Ascending aorta (tissue), 2 donors: ENCODE measurements at regions of chr10 and their contacts with region 1.

Region 1: DNA sequence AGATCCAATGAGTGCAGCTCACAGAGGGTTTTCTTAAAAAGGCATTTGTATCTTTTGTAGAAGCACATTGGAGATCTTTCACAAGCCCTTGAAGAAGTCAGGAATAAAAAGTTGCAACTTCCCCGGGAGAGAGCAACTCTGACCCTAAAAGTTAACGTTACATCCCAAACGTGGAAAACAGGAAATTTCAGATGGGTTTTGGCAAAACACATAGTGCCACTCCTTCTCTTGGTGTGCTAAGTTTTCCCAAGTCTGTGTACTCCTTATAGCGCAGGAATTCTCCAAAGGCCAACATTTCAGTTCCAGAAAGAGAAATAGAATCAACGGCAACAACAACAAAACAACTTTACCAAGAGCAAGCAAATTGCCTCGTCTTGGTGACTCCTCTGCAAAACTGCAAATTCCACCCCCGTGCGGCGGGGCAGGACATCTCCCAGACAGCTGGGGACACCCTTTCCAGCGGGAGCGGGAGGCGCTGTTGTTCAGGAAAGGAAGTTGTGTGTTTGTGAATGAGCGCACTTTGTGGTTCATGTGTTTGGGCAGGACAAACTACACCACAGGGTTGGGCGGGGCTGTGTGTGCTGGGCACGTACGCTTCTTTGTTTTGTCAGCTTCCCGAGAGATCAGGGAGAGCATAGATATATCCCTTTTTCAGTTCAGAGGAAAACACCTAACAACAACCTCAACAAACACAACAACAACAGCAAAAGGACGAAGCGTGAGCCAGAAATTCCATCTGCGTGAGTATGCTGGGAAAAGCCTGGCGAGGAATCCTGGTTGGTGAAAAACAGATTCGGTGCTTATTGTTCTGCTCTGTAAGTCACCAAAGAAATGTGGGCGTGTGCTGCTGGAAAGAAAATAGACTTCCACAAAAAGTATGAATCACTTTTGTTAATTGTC is 294.7 kb upstream of the PITRM1 start:
- DNase-seq: peak; percentile 39 to 84
- H3K4me3 ChIP-seq: peak overlapping the region in 1 of 2 donors; percentile 34
- H3K27ac ChIP-seq: peak overlapping the region; percentile 69 to 91
- H3K4me1 ChIP-seq: peaks cover 0 to 30% of the 10 kb centered on the region in 2 donors
- H3K27me3 ChIP-seq: no peaks in the 10 kb centered on the region
- CTCF ChIP-seq: peak in 2 of 3 experiments; percentile 21 to 36

Region 2: GRCh38 chr10:3398825-3399646 is 68.3 kb before region 1 on chr10:
- intact Hi-C with region 1: no loop called
- DNase-seq: no peak
- H3K4me3 ChIP-seq: no peak overlapping the region
- H3K27ac ChIP-seq: no peak overlapping the region
- H3K4me1 ChIP-seq: peaks cover 0 to 11% of the 10 kb centered on the region in 2 donors
- H3K27me3 ChIP-seq: no peaks in the 10 kb centered on the region
- CTCF ChIP-seq: no peak

Region 3: GRCh38 chr10:3452173-3452626 is 15.1 kb before region 1 on chr10:
- intact Hi-C with region 1: loop called (anchors 2 kb)
- DNase-seq: peak in 1 of 2 donors; percentile 71
- H3K4me3 ChIP-seq: peak overlapping the region in 1 of 2 donors; percentile 3
- H3K27ac ChIP-seq: peak overlapping the region; percentile 76 to 80
- H3K4me1 ChIP-seq: peaks cover 4 to 15% of the 10 kb centered on the region in 2 donors
- H3K27me3 ChIP-seq: no peaks in the 10 kb centered on the region
- CTCF ChIP-seq: peak; percentile 35 to 49 (median 49)

Region 4: DNA sequence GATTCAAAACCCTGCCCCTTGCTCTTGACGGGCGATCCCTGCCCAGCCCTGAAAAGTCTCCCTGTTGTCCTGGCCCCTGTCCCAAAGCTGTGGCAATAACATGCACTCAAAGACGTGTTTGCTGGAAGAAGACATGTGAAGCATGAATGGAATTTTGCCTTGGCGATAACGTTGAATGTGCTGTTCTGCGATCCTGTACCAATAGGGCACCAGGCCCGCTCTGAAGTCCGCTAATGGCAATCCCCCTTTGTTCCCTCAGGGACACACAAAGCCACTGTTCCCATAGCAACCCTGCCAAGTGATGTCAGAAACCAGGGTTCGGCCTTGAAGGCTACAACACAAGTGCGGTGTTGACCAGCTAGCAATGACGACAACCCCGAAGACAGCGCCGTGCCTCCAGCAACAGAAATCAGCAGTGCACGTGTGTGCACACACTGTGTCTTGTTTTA is 33.1 kb after region 1 on chr10:
- intact Hi-C with region 1: loop called (anchors 2 kb)
- DNase-seq: peak in 1 of 2 donors; percentile 90
- H3K4me3 ChIP-seq: peak overlapping the region in 1 of 2 donors; percentile 20
- H3K27ac ChIP-seq: peak overlapping the region in 1 of 2 donors; percentile 17
- H3K4me1 ChIP-seq: peaks cover 0 to 10% of the 10 kb centered on the region in 2 donors
- H3K27me3 ChIP-seq: no peaks in the 10 kb centered on the region
- CTCF ChIP-seq: no peak

Region 5: GRCh38 chr10:3740157-3740871 is 273.0 kb after region 1 on chr10:
- intact Hi-C with region 1: loop called (anchors 10 kb)
- DNase-seq: peak in 1 of 2 donors; percentile 28
- H3K4me3 ChIP-seq: no peak overlapping the region
- H3K27ac ChIP-seq: no peak overlapping the region
- H3K4me1 ChIP-seq: no peaks in the 10 kb centered on the region
- H3K27me3 ChIP-seq: no peaks in the 10 kb centered on the region
- CTCF ChIP-seq: no peak

Region 6: DNA sequence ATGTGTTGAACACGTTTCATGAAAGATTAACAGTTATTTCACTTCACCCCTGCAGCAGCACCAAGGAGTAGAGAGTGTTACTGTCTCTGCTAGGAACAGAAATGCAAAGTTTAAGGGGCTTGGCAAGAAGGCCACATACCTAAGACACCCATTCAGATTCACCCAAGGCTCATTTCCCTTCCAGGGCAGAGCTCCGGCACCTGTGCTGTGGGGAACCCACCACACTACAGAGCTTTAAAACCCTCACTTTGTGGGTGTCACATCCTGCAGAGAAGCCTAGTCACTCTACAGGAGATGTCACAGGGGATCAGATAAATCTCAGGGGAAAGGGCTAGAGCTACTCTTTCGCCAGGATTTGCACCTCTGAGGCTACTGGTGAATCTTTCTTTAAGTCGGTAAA is 493.8 kb after region 1 on chr10:
- intact Hi-C with region 1: no loop called
- DNase-seq: no peak
- H3K4me3 ChIP-seq: no peak overlapping the region
- H3K27ac ChIP-seq: peak overlapping the region in 1 of 2 donors; percentile 25
- H3K4me1 ChIP-seq: peaks cover 0 to 11% of the 10 kb centered on the region in 2 donors
- H3K27me3 ChIP-seq: no peaks in the 10 kb centered on the region
- CTCF ChIP-seq: no peak